ENCODE measurements at regions of chr7 and their contacts with region 1.

Region 1: GRCh38 chr7:43582503-43583423 is at the start of gene STK17A:
- DNase-seq: peak; percentile 87 to 94
- H3K4me3 ChIP-seq: peak within 1 kb of the TSS; percentile 77 to 90 (median 84)
- H3K27ac ChIP-seq: no peak within 1 kb of the TSS
- H3K4me1 ChIP-seq: peaks cover 0 to 12% (median 5%) of the 10 kb centered on the region in 4 experiments; a peak in 6 of 7 replicates
- H3K27me3 ChIP-seq: no peaks in the 10 kb centered on the region; a peak in 3 of 7 replicates
- CTCF ChIP-seq: peak; percentile 99
- EP300 ChIP-seq: 0 out of 3 replicates have a peak, but pooled peaks of 1 of the 2 experiments have one; percentile 45
- POLR2A ChIP-seq: peak in 1 of 2 experiments; percentile 85; a peak in 2 of 3 replicates
- RAD21 ChIP-seq: peak; percentile 94 to 95
- total RNA-seq, gene STK17A: 12.2 and 13.4 TPM in 2 replicates

Region 2: GRCh38 chr7:43454936-43455518 is 127.7 kb before region 1 on chr7:
- CTCF ChIA-PET with region 1: interaction called, 18 read pairs
- POLR2A ChIA-PET with region 1: no interaction called
- DNase-seq: no peak
- H3K4me3 ChIP-seq: no peak overlapping the region
- H3K27ac ChIP-seq: no peak overlapping the region
- H3K4me1 ChIP-seq: peaks cover 0 to 3% (median 2%) of the 10 kb centered on the region in 4 experiments; a peak in 4 of 7 replicates
- H3K27me3 ChIP-seq: no peaks in the 10 kb centered on the region
- CTCF ChIP-seq: peak in 2 of 3 experiments; percentile 37 to 46; a peak in 2 of 4 replicates
- EP300 ChIP-seq: no peak
- POLR2A ChIP-seq: no peak
- RAD21 ChIP-seq: peak; percentile 68 to 71

Region 3: GRCh38 chr7:43560742-43561360 is 21.9 kb before region 1 on chr7:
- CTCF ChIA-PET with region 1: interaction called, 44 read pairs
- POLR2A ChIA-PET with region 1: interaction called, 3 read pairs
- DNase-seq: no peak
- H3K4me3 ChIP-seq: no peak overlapping the region
- H3K27ac ChIP-seq: no peak overlapping the region
- H3K4me1 ChIP-seq: peaks cover 0 to 2% (median 0%) of the 10 kb centered on the region in 4 experiments; a peak in 2 of 7 replicates
- H3K27me3 ChIP-seq: no peaks in the 10 kb centered on the region
- CTCF ChIP-seq: no peak
- EP300 ChIP-seq: no peak
- POLR2A ChIP-seq: no peak
- RAD21 ChIP-seq: no peak

Region 4: GRCh38 chr7:43604251-43604650 is 21.5 kb after region 1 on chr7:
- CTCF ChIA-PET with region 1: interaction called, 17 read pairs
- POLR2A ChIA-PET with region 1: interaction called, 5 read pairs
- DNase-seq: no peak
- H3K4me3 ChIP-seq: no peak overlapping the region
- H3K27ac ChIP-seq: no peak overlapping the region
- H3K4me1 ChIP-seq: peaks cover 0 to 6% (median 2%) of the 10 kb centered on the region in 4 experiments; a peak in 4 of 7 replicates
- H3K27me3 ChIP-seq: no peaks in the 10 kb centered on the region; a peak in 1 of 7 replicates
- CTCF ChIP-seq: no peak
- EP300 ChIP-seq: no peak
- POLR2A ChIP-seq: no peak
- RAD21 ChIP-seq: no peak

Region 5: GRCh38 chr7:43693687-43694398 is 111.1 kb after region 1 on chr7:
- CTCF ChIA-PET with region 1: interaction called, 46 read pairs
- POLR2A ChIA-PET with region 1: interaction called, 3 read pairs
- DNase-seq: no peak
- H3K4me3 ChIP-seq: no peak overlapping the region
- H3K27ac ChIP-seq: no peak overlapping the region
- H3K4me1 ChIP-seq: peaks cover 0 to 3% (median 1%) of the 10 kb centered on the region in 4 experiments; a peak in 2 of 7 replicates
- H3K27me3 ChIP-seq: no peaks in the 10 kb centered on the region
- CTCF ChIP-seq: no peak
- EP300 ChIP-seq: no peak
- POLR2A ChIP-seq: no peak
- RAD21 ChIP-seq: no peak

Region 6: DNA sequence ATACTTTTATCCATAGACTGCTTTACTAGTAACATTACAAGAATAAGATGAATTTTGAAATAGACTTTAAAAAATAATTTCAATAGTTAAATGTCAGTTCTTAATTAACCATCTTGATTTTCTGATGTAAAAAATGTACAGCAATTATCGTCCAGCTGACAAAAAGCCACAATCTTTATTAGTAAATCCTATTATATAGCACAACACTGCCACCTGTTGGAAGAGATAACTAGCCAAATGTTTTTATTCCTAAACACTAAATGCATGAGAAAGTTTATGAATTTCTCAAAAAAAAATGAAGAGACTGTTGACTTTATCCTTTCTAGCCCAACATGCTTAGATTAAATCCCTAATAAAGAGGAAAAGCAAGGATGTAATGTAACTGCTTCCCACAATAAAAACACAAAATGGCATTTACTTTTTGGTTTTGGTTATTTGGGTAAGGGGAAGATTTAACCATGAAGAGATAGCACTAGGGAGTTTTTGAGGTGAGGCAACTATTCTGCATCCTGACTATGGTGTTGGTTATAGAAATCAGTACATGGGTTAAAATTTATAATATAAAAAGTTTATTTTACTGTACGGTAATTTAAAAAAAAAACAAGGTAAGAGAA is 138.5 kb after region 1 on chr7:
- CTCF ChIA-PET with region 1: interaction called, 28 read pairs
- POLR2A ChIA-PET with region 1: interaction called, 7 read pairs
- DNase-seq: no peak
- H3K4me3 ChIP-seq: no peak overlapping the region
- H3K27ac ChIP-seq: no peak overlapping the region
- H3K4me1 ChIP-seq: 0 out of 7 replicates have a peak, but pooled peaks cover 0 to 2% (median 0%) of the 10 kb centered on the region in 4 experiments
- H3K27me3 ChIP-seq: no peaks in the 10 kb centered on the region
- CTCF ChIP-seq: peak in 2 of 3 experiments; percentile 34 to 46; a peak in 2 of 4 replicates
- EP300 ChIP-seq: no peak
- POLR2A ChIP-seq: no peak
- RAD21 ChIP-seq: peak; percentile 49 to 57